ENCODE measurements at regions of chr2 and their contacts with region 1.

Region 1: DNA sequence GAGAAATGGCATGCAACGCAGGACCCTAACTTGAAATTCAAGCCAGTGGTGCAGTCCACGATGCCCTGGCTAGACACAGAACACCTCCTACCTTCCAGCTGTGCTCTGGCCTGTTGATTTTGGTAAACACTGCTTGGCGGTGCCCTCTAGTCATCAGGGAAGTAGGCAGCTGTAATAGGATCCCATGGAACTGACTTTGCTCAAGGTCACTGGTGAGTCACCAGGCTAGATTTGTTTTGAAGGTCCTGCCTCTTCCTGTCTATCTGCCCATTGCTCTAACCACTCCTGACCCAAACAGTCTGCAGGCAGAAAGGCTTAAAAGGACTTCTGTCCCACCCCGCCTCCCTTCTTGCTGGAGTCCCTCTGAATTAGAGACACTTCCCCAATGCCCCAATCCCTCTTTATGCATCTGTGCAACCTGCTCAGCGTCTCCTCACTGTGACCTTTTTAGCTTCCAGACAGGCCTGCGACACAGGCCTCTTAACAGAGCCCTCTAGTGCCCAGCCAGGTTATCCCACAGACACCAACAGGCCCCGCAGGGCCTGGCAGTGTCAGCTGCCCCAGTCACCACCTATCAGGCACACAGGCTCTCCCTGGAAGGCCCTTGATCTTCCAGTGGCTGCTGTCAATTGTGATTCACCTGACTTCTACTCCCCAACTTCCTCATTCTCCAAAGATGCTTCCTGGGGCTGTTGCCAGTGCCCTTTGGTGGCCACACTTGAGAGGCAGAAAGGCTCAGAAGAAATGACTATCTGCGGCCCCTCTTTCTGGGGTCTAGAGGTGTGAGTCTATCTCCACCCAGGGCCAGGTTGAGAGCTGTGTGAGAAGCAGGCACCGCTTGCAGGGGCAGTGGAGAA is 5.2 kb downstream of the TMEM127 start:
- DNase-seq: peak; percentile 68
- CTCF ChIP-seq: peak; percentile 53

Region 2: GRCh38 chr2:96233880-96234316 is 26.7 kb before region 1 on chr2:
- CTCF ChIA-PET with region 1: interaction called, 15 read pairs
- POLR2A ChIA-PET with region 1: no interaction called
- DNase-seq: peak; percentile 70
- CTCF ChIP-seq: peak; percentile 45

Region 3: GRCh38 chr2:96320728-96321622 is 60.3 kb after region 1 on chr2:
- CTCF ChIA-PET with region 1: no interaction called
- POLR2A ChIA-PET with region 1: no interaction called
- DNase-seq: peak; percentile 52
- CTCF ChIP-seq: no peak

Region 4: DNA sequence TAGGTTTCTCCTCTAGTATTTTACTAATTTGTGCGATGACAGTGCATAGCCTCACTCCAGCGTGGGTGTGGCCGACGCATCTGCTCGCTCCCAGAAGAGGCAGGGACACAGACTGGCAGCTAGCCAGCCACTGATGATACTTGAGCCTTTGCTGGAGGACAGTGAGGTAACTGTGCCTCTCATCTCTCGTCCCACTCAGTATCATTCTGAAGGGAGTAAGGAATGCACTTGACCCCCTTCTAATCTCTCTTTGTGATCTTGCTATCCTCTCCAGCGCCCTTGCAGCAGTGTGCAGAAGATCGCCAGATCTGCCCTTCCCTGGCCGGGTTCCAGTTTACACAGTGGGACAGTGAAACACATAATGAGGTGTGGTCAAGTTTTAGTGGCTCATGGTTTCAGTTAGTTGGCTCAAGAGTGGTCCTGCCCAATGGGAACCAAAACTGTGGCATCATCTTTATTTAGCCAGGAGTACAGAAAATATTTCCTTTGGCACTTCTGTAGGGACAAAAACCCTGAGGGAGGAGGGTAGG is 92.5 kb after region 1 on chr2:
- CTCF ChIA-PET with region 1: no interaction called
- POLR2A ChIA-PET with region 1: no interaction called
- DNase-seq: no peak
- CTCF ChIP-seq: no peak